HEK293T (cell line): ENCODE measurements at regions of chr5 and their contacts with region 1.

Region 1: DNA sequence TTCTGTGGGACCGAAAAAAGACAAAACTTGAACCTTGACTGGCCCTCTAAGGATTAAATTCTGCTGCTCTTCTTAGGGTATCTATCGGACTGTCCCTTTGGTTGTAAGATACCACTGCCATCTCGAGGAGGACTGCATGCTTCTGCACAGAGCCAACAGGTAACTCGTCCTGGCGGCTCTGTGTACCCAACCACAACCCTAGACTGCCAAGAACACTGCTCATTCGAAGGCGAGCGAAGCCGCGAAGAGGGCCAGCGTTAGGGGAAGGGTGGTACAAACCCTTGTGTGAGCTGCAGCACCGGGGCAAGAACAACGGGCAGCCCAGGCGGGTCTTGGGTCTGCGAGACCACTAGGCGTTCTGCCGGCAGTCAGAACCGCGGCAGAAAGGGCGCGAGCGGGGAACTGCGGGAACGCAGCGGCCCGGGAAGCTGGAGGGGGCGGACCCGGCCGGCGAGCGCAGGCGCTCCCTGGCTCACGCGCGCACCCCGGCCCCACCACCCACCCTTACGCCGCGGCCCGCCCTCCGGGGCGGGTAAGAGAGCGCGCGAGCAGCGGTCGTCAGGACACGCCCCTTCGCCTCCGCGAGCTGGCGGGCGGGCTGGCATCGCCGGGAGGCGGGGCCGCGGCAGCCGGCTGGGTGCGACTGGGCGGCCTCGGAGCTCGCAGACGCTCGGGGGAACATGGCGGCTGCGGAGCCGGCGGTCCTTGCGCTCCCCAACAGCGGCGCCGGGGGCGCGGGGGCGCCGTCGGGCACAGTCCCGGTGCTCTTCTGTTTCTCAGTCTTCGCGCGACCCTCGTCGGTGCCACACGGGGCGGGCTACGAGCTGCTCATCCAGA is at the start of gene ISOC1:
- DNase-seq: peak; percentile 88

Region 2: DNA sequence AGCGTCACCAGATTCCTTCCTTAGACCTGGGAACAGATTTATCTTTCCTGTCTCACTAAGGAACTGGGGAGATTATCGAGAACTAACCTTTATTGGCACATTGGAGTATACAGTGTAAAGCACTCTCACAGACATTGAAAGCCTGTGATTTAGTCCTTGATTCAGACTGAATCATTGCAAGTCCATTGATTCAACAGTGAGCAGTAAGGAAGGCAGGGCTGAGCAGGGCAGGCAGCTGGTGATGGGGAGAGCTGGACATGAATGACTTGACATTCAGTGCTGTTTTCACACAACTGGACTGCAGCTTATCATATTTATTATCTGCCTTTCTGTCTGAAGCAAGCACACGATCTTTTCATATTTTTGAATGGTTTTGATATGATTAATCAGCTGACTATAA is 16.4 kb after region 1 on chr5:
- CTCF ChIA-PET with region 1: interaction called, 3 read pairs
- POLR2A ChIA-PET with region 1: interaction called, 10 read pairs
- DNase-seq: no peak

Region 3: DNA sequence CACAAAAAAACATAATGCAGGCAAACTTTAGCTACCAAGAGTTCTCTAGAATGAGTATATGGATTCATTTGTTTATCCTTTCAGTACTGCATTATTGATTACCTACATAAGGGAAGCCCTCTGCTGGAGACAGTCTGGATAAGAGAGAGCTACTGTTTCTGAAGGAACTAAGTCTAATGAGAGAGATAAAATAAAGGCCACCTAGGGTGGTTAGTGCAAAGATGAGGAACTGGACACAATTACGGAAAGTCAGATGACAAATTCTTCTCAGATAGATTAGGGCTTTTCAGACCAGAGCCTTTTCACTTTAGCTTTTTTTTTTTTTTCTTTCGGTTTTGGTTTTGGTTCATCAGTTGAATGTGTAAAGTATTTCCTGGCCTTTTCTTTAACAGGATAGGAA is 31.5 kb after region 1 on chr5:
- CTCF ChIA-PET with region 1: interaction called, 10 read pairs
- POLR2A ChIA-PET with region 1: interaction called, 4 read pairs
- DNase-seq: no peak

Region 4: GRCh38 chr5:129177536-129178229 is 83.4 kb after region 1 on chr5:
- CTCF ChIA-PET with region 1: no interaction called
- POLR2A ChIA-PET with region 1: no interaction called
- DNase-seq: no peak